ENCODE measurements at regions of chr3 and their contacts with region 1.

Region 1: DNA sequence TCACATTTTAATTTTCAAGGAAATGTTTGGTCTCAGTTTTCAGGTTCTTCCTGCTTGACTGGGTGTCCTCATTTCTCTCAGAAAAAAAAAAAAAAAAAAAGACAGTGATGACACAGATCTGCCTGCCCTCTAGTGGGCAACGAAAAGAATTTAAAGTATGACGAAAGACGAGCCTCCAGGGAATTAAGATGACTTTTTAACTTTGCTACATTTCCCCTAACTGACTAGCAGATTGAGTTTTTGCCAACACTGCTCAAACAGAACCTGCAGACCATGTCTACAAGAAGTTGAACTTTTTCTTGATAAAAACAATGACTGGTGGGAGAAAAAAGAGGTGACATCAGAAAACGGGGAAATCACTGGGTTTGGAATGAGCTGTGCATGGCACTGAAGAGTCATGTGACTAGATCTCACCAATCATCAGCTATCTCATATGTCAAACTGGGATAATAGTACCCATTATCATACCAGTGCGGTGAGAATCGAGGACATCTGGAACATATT is 40.8 kb downstream of the EOMES start:
- DNase-seq: no peak
- ATAC-seq: peak; percentile 85
- H3K4me3 Mint-ChIP-seq: peak overlapping the region; percentile 55
- H3K27ac Mint-ChIP-seq: peak overlapping the region; percentile 36
- H3K4me1 Mint-ChIP-seq: peaks cover 19% of the 10 kb centered on the region
- H3K27me3 Mint-ChIP-seq: peaks cover 3% of the 10 kb centered on the region
- CTCF ChIP-seq: no peak

Region 2: DNA sequence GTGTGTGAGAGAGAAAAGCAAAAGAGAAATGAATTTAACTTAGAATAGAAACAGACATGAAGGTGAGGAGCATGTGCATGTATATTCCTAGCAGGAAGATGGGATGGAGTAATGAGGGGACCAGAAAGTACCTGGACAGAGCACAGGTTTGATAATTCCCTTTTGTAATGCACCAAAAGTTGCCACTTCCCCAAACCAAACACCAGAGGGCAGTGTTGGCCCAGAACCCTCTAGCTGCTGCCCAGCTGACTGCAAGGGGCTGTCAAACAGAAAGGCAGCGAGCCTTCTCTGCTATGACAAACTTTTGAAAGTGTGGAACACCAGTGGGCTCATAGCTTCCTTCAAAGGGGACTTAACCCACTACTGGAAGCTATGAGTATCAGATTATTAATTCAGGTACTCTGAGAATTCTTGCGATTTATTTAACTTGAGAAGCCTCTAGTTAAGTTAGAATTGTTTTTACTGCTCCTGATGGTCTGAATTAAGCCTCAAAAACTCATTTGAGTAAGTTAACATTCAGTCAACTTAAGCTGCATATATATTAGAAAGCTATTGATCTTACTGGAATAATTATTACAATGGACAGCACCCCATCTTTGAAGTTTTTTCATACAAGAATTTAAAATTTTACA is 547.0 kb before region 1 on chr3:
- CTCF ChIA-PET with region 1: no interaction called
- POLR2A ChIA-PET with region 1: no interaction called
- intact Hi-C with region 1: loop called (anchors 1 kb)
- DNase-seq: peak; percentile 27
- ATAC-seq: peak; percentile 71
- H3K4me3 Mint-ChIP-seq: no peak overlapping the region
- H3K27ac Mint-ChIP-seq: no peak overlapping the region
- H3K4me1 Mint-ChIP-seq: no peaks in the 10 kb centered on the region
- H3K27me3 Mint-ChIP-seq: no peaks in the 10 kb centered on the region
- CTCF ChIP-seq: peak; percentile 83

Region 3: GRCh38 chr3:27312044-27312668 is 369.1 kb before region 1 on chr3:
- CTCF ChIA-PET with region 1: no interaction called
- POLR2A ChIA-PET with region 1: no interaction called
- intact Hi-C with region 1: loop called (anchors 1 kb)
- DNase-seq: no peak
- ATAC-seq: peak; percentile 70
- H3K4me3 Mint-ChIP-seq: no peak overlapping the region
- H3K27ac Mint-ChIP-seq: no peak overlapping the region
- H3K4me1 Mint-ChIP-seq: no peaks in the 10 kb centered on the region
- H3K27me3 Mint-ChIP-seq: no peaks in the 10 kb centered on the region
- CTCF ChIP-seq: peak; percentile 35

Region 4: DNA sequence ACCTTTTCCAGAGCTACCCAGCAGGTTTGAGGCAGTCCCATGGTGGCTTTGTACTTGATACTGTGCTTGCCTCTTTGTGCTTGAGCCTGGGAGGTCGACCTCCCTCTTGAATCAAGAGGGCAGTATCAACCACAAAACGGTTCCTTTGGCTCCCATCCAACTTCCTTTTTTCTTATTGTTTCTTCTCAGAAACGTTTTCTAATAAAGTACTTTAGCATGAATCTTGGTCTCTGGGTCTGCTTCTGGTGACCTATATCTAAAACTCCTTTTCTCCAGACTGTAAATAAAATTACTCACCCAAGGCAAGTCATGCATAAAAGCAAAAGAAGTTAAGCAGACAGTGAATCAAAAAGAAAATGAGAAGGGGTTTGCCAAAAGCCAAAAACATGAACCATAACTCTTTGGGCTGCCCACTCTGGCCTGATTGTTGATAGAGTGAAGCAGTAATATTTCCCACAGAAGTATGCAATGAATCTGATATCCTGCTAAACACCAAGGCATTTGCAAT is 84.9 kb before region 1 on chr3:
- CTCF ChIA-PET with region 1: no interaction called
- POLR2A ChIA-PET with region 1: no interaction called
- intact Hi-C with region 1: loop called (anchors 10 kb)
- DNase-seq: no peak
- ATAC-seq: peak; percentile 49
- H3K4me3 Mint-ChIP-seq: no peak overlapping the region
- H3K27ac Mint-ChIP-seq: peak overlapping the region; percentile 43
- H3K4me1 Mint-ChIP-seq: peaks cover 21% of the 10 kb centered on the region
- H3K27me3 Mint-ChIP-seq: no peaks in the 10 kb centered on the region
- CTCF ChIP-seq: no peak

Region 5: GRCh38 chr3:27632431-27633223 is 48.7 kb before region 1 on chr3:
- CTCF ChIA-PET with region 1: interaction called, 3 read pairs
- POLR2A ChIA-PET with region 1: no interaction called
- intact Hi-C with region 1: loop called (anchors 2 kb)
- DNase-seq: peak; percentile 46
- ATAC-seq: peak; percentile 82
- H3K4me3 Mint-ChIP-seq: peak overlapping the region; percentile 90
- H3K27ac Mint-ChIP-seq: peak overlapping the region; percentile 78
- H3K4me1 Mint-ChIP-seq: peaks cover 17% of the 10 kb centered on the region
- H3K27me3 Mint-ChIP-seq: no peaks in the 10 kb centered on the region
- CTCF ChIP-seq: no peak